ENCODE measurements at regions of chr4 and their contacts with region 1.

Region 1: DNA sequence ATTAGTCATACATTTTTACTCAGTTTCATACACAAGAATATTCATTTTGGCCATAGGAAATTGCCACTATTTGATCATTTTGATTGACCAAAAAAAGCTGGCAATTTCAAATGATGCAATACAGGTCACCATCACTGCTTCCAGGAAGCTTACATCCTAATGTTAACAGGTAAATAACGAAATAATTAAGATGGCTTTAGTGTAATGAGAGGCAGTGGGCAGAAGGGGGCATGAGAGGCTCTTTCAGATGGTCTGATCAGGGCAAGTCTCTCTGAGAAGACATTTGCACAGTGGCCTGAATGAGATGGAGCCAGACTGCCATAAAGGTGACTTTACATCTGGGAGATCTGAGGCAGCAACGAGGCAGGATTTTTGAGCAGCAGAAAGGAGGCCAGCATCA is 170.7 kb downstream of the SLIT2 start:
- DNase-seq: peak in 4 of 5 donors; percentile 41 to 62 (median 55)
- H3K4me3 ChIP-seq: no peak overlapping the region
- H3K27ac ChIP-seq: no peak overlapping the region
- H3K4me1 ChIP-seq: no peaks in the 10 kb centered on the region
- H3K27me3 ChIP-seq: no peaks in the 10 kb centered on the region
- CTCF ChIP-seq: peak; percentile 60

Region 2: GRCh38 chr4:20203508-20203907 is 218.9 kb before region 1 on chr4:
- intact Hi-C with region 1: no loop called
- DNase-seq: peak in 2 of 5 donors; percentile 6 to 23
- H3K4me3 ChIP-seq: no peak overlapping the region
- H3K27ac ChIP-seq: no peak overlapping the region
- H3K4me1 ChIP-seq: no peaks in the 10 kb centered on the region
- H3K27me3 ChIP-seq: no peaks in the 10 kb centered on the region
- CTCF ChIP-seq: no peak

Region 3: GRCh38 chr4:20684852-20685763 is 262.7 kb after region 1 on chr4:
- intact Hi-C with region 1: loop called (anchors 10 kb)
- DNase-seq: peak in 2 of 5 donors; percentile 40
- H3K4me3 ChIP-seq: no peak overlapping the region
- H3K27ac ChIP-seq: no peak overlapping the region
- H3K4me1 ChIP-seq: no peaks in the 10 kb centered on the region
- H3K27me3 ChIP-seq: no peaks in the 10 kb centered on the region
- CTCF ChIP-seq: peak; percentile 52

Measured in kidney (tissue), 22 donors.